Head of caudate nucleus (tissue), 42 donors: ENCODE measurements at regions of chr10 and their contacts with region 1.

Region 1: DNA sequence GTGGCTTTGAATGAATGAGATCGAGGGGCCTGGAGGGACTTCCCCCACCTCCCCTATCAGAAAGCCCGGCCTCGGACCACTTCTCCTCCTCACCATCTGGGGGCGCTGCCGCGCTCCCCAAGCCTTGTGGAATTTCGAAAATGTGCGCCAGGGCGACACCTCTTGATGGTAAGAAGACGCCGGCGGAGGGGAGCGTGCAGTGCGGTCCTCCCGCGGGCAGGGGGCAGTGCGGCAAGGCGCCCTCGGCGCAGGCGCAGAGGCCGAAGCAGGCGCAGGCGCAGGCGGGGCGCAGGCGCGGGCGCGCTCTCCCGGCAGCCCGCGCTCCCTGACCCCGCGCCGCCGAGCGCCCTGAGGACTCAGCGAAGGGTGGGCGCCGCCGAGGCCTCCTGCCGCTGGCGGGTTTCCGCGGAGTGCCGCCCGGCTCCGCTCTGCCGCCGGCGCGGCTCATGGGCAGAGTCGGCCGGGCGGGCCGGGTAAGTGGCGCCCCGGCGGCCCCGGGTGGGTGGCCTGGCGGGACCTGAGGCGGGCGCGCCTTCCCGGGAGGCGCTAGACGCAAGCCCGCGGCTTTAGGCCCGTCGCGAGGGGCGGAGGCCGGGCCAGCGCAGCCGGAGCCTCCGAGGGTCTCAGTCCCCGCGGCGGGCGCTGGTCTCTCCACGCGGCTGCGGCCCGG is at the start of gene RBM17:
- DNase-seq: peak; percentile 86 to 97 (median 93)

Region 2: DNA sequence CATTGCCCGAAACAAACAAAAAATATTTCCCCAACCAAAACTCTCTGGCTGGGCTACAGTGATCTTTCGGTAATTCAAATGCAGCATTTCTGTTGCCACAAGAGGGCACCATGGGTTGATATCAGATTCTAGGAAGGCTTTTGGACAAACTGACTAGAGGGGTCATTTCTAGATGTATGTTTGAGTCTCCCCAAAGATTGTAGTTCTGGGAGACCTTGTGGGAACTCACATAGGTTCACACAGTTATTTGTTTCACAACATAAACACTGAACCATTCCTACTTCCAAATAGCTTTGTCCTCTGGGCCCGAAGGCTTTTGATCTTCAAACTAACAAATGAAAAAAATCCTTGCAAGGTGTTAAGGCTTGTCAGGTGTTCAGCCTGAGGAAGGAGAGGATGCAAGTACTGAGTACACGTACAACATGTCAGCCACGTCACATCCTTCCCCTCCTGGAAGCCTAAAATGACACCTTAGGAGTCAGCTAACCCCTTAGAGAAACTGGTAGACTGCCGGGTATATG is 74.6 kb before region 1 on chr10:
- intact Hi-C with region 1: loop called (anchors 10 kb)
- DNase-seq: peak in 36 of 42 donors; percentile 8 to 86 (median 59)

Region 3: GRCh38 chr10:6108603-6109443 is 20.0 kb after region 1 on chr10:
- intact Hi-C with region 1: no loop called
- DNase-seq: peak in 3 of 42 donors; percentile 29 to 60 (median 51)

Region 4: GRCh38 chr10:6163364-6164270 is 74.8 kb after region 1 on chr10:
- intact Hi-C with region 1: loop called (anchors 5 kb)
- DNase-seq: peak; percentile 53 to 95 (median 90)